CD8-positive, alpha-beta T cell (primary cell): ENCODE measurements at regions of chr11 and their contacts with region 1.

Region 1: DNA sequence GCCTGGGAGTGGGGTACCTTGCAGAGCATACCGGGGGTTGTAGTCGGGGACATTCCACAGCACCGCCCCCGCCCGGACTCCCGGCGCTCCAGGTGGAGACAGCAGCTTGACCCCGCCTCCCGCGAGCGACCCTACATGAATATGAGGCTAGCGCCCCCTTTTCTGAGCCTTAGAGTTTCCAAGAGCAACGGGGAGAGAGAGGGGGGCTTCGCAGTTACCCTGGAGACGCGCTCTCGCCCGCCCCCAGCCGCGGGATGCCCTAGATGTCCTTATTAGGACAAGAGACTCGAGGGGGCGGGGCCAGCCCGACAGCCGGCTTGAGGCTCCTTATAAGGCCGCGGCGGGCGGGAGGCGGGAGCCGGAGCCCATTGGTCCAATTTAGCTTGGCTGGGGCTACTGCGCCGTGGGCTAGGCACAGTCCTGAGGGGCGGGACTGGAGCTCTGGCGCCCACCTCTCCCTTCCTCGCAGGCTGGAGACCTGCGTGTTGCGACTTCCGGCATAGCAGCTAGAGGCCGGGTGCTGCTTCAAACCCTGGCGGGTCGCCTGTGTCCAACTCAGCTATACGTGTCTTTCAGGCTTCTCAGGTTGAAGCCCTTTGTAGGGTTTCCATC is 927 bp upstream of the MUS81 start:
- DNase-seq: peak; percentile 91 to 98 (median 98)
- ATAC-seq: peak; percentile 60
- H3K4me3 ChIP-seq: peak overlapping the region; percentile 65 to 73
- H3K4me3 Mint-ChIP-seq: peak overlapping the region; percentile 95
- H3K27ac ChIP-seq: peak overlapping the region; percentile 78 to 98
- H3K27ac Mint-ChIP-seq: peak overlapping the region; percentile 96
- H3K4me1 ChIP-seq: peaks cover 42% of the 10 kb centered on the region
- H3K4me1 Mint-ChIP-seq: peaks cover 51% of the 10 kb centered on the region
- H3K27me3 ChIP-seq: no peaks in the 10 kb centered on the region
- H3K27me3 Mint-ChIP-seq: no peaks in the 10 kb centered on the region
- CTCF ChIP-seq: no peak

Region 2: DNA sequence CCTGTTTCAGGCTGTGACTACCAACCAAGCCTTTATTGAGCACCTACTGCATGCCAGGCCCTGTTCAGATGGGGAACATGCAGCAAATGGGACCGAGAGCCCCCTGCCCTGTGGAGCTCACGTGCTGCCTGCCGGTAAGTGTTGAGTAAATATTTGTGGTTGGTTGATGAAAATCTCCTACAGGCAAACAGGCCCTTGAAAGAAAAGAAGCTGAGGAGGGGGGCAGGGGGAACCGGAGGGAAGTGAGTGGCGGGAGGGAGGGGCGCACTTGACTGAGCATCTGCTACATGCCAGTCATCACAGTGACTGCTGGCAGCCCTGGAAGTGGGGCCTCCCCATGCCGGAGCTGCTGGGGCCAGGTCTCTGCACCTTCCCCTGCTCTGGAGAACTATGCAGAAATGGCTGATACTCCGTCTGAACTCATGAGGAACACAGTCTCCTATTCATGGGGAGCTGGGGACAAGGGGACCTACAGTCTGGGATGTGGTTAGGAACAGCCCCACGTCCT is 1727.6 kb before region 1 on chr11:
- CTCF ChIA-PET with region 1: no interaction called
- POLR2A ChIA-PET with region 1: no interaction called
- intact Hi-C with region 1: no loop called
- DNase-seq: no peak
- ATAC-seq: no peak
- H3K4me3 ChIP-seq: no peak overlapping the region
- H3K4me3 Mint-ChIP-seq: no peak overlapping the region
- H3K27ac ChIP-seq: no peak overlapping the region
- H3K27ac Mint-ChIP-seq: no peak overlapping the region
- H3K4me1 ChIP-seq: no peaks in the 10 kb centered on the region
- H3K4me1 Mint-ChIP-seq: peaks cover 2% of the 10 kb centered on the region
- H3K27me3 ChIP-seq: no peaks in the 10 kb centered on the region
- H3K27me3 Mint-ChIP-seq: no peaks in the 10 kb centered on the region
- CTCF ChIP-seq: no peak

Region 3: GRCh38 chr11:64924102-64924851 is 935.0 kb before region 1 on chr11 and contains the start of gene PPP2R5B:
- CTCF ChIA-PET with region 1: no interaction called
- POLR2A ChIA-PET with region 1: no interaction called
- intact Hi-C with region 1: loop called (anchors 2 to 5 kb)
- DNase-seq: peak; percentile 78 to 94 (median 90)
- ATAC-seq: peak; percentile 94
- H3K4me3 ChIP-seq: peak within 1 kb of the TSS; percentile 69 to 76
- H3K4me3 Mint-ChIP-seq: peak within 1 kb of the TSS; percentile 95
- H3K27ac ChIP-seq: peak within 1 kb of the TSS; percentile 58 to 92
- H3K27ac Mint-ChIP-seq: peak within 1 kb of the TSS; percentile 96
- H3K4me1 ChIP-seq: peaks cover 19% of the 10 kb centered on the region
- H3K4me1 Mint-ChIP-seq: peaks cover 15% of the 10 kb centered on the region
- H3K27me3 ChIP-seq: no peaks in the 10 kb centered on the region
- H3K27me3 Mint-ChIP-seq: no peaks in the 10 kb centered on the region
- CTCF ChIP-seq: no peak
- total RNA-seq, gene PPP2R5B: 14.8 to 18.0 TPM

Region 4: DNA sequence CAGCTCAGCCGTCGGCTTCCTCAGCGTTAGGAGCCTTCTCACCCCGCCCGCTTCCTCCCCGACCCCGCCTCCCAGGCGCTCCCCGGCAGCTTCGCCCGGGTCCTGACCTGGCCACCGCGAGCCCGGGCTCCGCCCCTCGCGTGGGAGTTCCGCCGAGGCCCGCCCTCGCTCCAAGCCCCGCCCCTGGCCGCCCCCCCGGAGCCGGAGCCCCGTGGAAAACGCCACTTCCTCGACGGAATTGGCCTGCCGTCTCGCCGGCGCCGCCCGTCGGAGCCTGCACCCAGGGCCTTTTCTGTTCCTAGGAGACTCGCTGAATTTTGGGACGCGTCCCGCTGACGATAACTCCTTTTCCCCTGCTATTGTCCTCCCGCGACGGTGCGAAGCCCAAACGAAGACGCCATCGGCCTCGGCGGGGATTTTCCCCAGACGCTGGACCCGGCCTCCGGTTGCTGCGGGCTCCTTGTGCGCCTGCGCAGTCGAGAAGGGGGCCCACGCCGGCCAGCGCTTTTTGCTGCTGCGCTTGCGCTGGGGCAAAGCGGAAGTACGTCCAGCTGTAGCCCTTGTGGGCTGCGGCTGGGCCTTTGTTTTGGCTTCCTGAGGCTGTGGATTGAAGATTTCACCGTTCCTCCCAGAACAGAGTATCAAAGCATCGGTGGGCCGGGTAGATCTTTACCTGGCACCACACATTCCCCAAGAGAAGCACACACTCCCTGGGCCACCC is 206.6 kb before region 1 on chr11:
- CTCF ChIA-PET with region 1: no interaction called
- POLR2A ChIA-PET with region 1: no interaction called
- intact Hi-C with region 1: loop called (anchors 5 kb)
- DNase-seq: peak; percentile 93 to 99 (median 97)
- ATAC-seq: peak; percentile 80
- H3K4me3 ChIP-seq: peak overlapping the region; percentile 69 to 83
- H3K4me3 Mint-ChIP-seq: peak overlapping the region; percentile 86
- H3K27ac ChIP-seq: peak overlapping the region; percentile 94 to 100
- H3K27ac Mint-ChIP-seq: peak overlapping the region; percentile 98
- H3K4me1 ChIP-seq: peaks cover 27% of the 10 kb centered on the region
- H3K4me1 Mint-ChIP-seq: peaks cover 45% of the 10 kb centered on the region
- H3K27me3 ChIP-seq: no peaks in the 10 kb centered on the region
- H3K27me3 Mint-ChIP-seq: no peaks in the 10 kb centered on the region
- CTCF ChIP-seq: no peak

Region 5: GRCh38 chr11:65779851-65780577 is 79.3 kb before region 1 on chr11:
- CTCF ChIA-PET with region 1: interaction called, 10 read pairs
- POLR2A ChIA-PET with region 1: interaction called, 9 read pairs
- intact Hi-C with region 1: loop called in 1 of 2 experiments (anchors 2 kb)
- DNase-seq: peak; percentile 46 to 88 (median 76)
- ATAC-seq: peak; percentile 74
- H3K4me3 ChIP-seq: peak overlapping the region; percentile 85
- H3K4me3 Mint-ChIP-seq: peak overlapping the region; percentile 86
- H3K27ac ChIP-seq: peak overlapping the region; percentile 31 to 52
- H3K27ac Mint-ChIP-seq: peak overlapping the region; percentile 77
- H3K4me1 ChIP-seq: peaks cover 17% of the 10 kb centered on the region
- H3K4me1 Mint-ChIP-seq: peaks cover 8% of the 10 kb centered on the region
- H3K27me3 ChIP-seq: no peaks in the 10 kb centered on the region
- H3K27me3 Mint-ChIP-seq: peaks cover under 1% of the 10 kb centered on the region
- CTCF ChIP-seq: peak; percentile 97

Region 6: GRCh38 chr11:65879617-65880016 is 20.3 kb after region 1 on chr11 and contains the start of gene CTSW:
- CTCF ChIA-PET with region 1: interaction called, 287 read pairs
- POLR2A ChIA-PET with region 1: interaction called, 178 read pairs
- intact Hi-C with region 1: loop called in 1 of 2 experiments (anchors 1 kb)
- DNase-seq: peak in 8 of 9 experiments; percentile 40 to 84 (median 70)
- ATAC-seq: peak; percentile 82
- H3K4me3 ChIP-seq: peak within 1 kb of the TSS; percentile 48 to 68
- H3K4me3 Mint-ChIP-seq: peak within 1 kb of the TSS; percentile 86
- H3K27ac ChIP-seq: peak within 1 kb of the TSS; percentile 44 to 81
- H3K27ac Mint-ChIP-seq: peak within 1 kb of the TSS; percentile 91
- H3K4me1 ChIP-seq: peaks cover 43% of the 10 kb centered on the region
- H3K4me1 Mint-ChIP-seq: peaks cover 58% of the 10 kb centered on the region
- H3K27me3 ChIP-seq: no peaks in the 10 kb centered on the region
- H3K27me3 Mint-ChIP-seq: no peaks in the 10 kb centered on the region
- CTCF ChIP-seq: no peak
- total RNA-seq, gene CTSW: 193 to 200 TPM

Region 7: DNA sequence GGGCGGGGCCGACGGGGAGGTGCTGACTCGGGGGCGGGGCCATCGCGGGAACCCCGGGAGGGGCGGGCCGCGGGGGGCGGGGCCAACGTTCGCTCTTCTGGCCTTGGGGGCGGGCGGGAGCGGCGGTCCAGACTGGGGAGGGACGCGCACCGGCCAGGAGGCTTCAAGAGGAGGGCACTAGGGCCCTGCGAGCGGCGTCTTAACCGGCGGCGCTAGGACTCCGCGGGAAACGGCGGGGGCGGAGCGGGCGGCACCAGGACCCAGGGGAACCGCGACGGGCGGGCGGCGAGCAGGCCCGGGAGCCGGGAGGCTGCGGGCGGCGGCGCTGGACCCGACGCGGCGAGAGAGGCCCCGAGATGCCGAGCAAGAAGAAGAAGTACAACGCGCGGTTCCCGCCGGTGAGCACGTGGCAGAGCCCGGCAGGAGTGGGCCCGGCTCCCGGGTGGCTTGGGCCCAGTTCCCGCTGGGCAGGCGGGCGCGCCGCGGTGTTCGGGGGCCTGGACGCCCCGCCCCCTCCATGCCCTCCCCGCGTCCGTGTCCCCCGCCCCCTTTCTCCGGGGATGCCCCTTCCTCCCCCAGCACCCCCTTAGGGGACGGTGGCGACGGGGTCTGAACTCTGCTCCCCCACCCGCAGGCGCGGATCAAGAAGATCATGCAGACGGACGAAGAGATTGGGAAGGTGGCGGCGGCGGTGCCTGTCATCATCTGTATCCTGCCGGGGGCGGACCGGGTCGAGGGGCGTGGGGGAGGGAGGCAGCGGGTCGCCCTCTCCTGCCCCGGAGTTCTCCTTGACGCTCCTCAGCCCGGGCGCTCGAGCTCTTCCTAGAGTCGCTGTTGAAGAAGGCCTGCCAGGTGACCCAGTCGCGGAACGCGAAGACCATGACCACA is 60.1 kb after region 1 on chr11 and contains the start of gene DRAP1:
- CTCF ChIA-PET with region 1: interaction called, 6 read pairs
- POLR2A ChIA-PET with region 1: interaction called, 7 read pairs
- intact Hi-C with region 1: loop called (anchors 1 kb)
- DNase-seq: peak; percentile 98 to 100 (median 99)
- ATAC-seq: peak; percentile 89
- H3K4me3 ChIP-seq: peak within 1 kb of the TSS; percentile 94
- H3K4me3 Mint-ChIP-seq: peak within 1 kb of the TSS; percentile 91
- H3K27ac ChIP-seq: peak within 1 kb of the TSS; percentile 79 to 81
- H3K27ac Mint-ChIP-seq: peak within 1 kb of the TSS; percentile 93
- H3K4me1 ChIP-seq: peaks cover 41% of the 10 kb centered on the region
- H3K4me1 Mint-ChIP-seq: peaks cover 51% of the 10 kb centered on the region
- H3K27me3 ChIP-seq: no peaks in the 10 kb centered on the region
- H3K27me3 Mint-ChIP-seq: no peaks in the 10 kb centered on the region
- CTCF ChIP-seq: no peak
- total RNA-seq, gene DRAP1: 62.2 to 63.1 TPM

Region 8: DNA sequence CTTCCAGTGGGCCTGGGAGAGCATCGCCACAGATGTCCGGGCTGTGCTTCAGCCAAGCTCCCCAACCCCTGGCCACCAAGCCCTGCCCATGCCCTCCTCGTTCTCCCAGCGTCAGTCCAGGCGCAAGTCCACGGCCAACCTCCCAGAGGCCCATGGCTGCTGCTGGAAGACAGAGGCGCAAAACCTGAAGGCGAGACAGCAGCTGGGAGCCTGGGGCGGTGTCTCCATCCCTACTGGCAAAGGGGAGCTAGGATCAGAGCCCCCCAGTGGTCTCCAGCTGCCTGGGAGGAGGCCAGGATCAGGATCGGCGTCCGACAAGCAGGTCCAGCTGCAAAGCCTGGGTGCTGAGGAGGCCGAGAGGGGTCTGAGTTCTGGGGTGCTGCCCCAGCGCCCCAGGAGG is 87.8 kb after region 1 on chr11:
- CTCF ChIA-PET with region 1: no interaction called
- POLR2A ChIA-PET with region 1: no interaction called
- intact Hi-C with region 1: no loop called
- DNase-seq: no peak
- ATAC-seq: no peak
- H3K4me3 ChIP-seq: no peak overlapping the region
- H3K4me3 Mint-ChIP-seq: no peak overlapping the region
- H3K27ac ChIP-seq: no peak overlapping the region
- H3K27ac Mint-ChIP-seq: no peak overlapping the region
- H3K4me1 ChIP-seq: no peaks in the 10 kb centered on the region
- H3K4me1 Mint-ChIP-seq: no peaks in the 10 kb centered on the region
- H3K27me3 ChIP-seq: no peaks in the 10 kb centered on the region
- H3K27me3 Mint-ChIP-seq: no peaks in the 10 kb centered on the region
- CTCF ChIP-seq: no peak

Region 9: GRCh38 chr11:66001942-66002647 is 142.8 kb after region 1 on chr11 and contains the starts of genes BANF1 and EIF1AD:
- CTCF ChIA-PET with region 1: interaction called, 12 read pairs
- POLR2A ChIA-PET with region 1: interaction called, 7 read pairs
- intact Hi-C with region 1: loop called (anchors 1 kb)
- DNase-seq: peak; percentile 85 to 98 (median 92)
- ATAC-seq: peak; percentile 83
- H3K4me3 ChIP-seq: peak within 1 kb of the TSS; percentile 80 to 98
- H3K4me3 Mint-ChIP-seq: peak within 1 kb of the TSS; percentile 99
- H3K27ac ChIP-seq: peak within 1 kb of the TSS; percentile 93 to 95
- H3K27ac Mint-ChIP-seq: peak within 1 kb of the TSS; percentile 98
- H3K4me1 ChIP-seq: peaks cover 21% of the 10 kb centered on the region
- H3K4me1 Mint-ChIP-seq: peaks cover 43% of the 10 kb centered on the region
- H3K27me3 ChIP-seq: no peaks in the 10 kb centered on the region
- H3K27me3 Mint-ChIP-seq: no peaks in the 10 kb centered on the region
- CTCF ChIP-seq: no peak
- total RNA-seq, gene BANF1: 31.6 to 34.0 TPM
- total RNA-seq, gene EIF1AD: 119 to 126 TPM